ENCODE measurements at regions of chr7 and their contacts with region 1.

Region 1: DNA sequence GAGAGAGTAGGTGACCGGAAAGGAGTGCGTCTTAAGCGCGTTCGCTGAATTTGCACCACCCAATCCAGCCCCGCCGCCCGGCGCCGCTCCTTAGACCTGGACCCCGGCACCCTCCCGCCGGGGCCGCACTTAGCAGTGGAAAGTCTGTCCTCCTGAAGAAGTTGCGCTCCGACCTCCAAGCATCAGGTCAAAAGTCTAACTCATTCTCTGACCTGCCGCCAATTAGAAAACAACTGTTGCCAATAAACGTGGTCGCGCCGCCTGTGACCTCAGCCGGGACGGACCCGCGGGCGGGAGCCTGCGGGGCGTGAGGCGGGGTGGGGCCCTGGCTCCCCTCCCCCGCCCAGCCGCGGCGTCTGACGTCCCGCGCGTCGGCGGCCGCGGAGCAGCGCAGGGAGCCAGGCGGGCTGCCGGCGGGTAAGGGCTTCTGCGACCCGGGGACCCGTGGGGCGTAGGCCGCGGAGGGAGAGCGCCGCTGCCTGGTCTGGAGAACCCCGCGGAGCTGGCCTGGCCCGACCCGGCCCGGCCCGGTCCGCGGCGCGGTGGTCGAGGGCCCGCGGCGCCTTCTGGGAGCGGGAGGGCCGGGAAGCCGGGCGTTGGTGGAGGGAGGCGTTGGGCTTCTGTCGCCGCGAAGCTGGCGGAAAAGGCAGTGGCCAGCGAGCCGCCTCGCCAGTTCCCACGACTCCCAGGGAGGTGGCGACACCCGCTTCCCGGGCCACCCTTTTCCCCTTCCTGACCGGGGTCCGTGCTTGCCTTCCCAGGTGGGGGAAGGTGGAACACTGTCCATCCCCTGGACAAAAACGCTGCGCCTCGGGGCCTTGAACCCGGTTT is at the start of gene BCAP29:
- DNase-seq: peak; percentile 22 to 87 (median 59)
- ATAC-seq: peak; percentile 95
- H3K4me3 ChIP-seq: peak within 1 kb of the TSS; percentile 81 to 91
- H3K4me3 Mint-ChIP-seq: peak within 1 kb of the TSS; percentile 90
- H3K27ac ChIP-seq: peak within 1 kb of the TSS; percentile 67 to 69
- H3K27ac Mint-ChIP-seq: peak within 1 kb of the TSS; percentile 91
- H3K4me1 ChIP-seq: peaks cover 14% of the 10 kb centered on the region
- H3K4me1 Mint-ChIP-seq: peaks cover 25% of the 10 kb centered on the region
- H3K27me3 ChIP-seq: no peaks in the 10 kb centered on the region
- H3K27me3 Mint-ChIP-seq: no peaks in the 10 kb centered on the region
- CTCF ChIP-seq: no peak
- total RNA-seq, gene BCAP29: 7.9 to 9.0 TPM

Region 2: DNA sequence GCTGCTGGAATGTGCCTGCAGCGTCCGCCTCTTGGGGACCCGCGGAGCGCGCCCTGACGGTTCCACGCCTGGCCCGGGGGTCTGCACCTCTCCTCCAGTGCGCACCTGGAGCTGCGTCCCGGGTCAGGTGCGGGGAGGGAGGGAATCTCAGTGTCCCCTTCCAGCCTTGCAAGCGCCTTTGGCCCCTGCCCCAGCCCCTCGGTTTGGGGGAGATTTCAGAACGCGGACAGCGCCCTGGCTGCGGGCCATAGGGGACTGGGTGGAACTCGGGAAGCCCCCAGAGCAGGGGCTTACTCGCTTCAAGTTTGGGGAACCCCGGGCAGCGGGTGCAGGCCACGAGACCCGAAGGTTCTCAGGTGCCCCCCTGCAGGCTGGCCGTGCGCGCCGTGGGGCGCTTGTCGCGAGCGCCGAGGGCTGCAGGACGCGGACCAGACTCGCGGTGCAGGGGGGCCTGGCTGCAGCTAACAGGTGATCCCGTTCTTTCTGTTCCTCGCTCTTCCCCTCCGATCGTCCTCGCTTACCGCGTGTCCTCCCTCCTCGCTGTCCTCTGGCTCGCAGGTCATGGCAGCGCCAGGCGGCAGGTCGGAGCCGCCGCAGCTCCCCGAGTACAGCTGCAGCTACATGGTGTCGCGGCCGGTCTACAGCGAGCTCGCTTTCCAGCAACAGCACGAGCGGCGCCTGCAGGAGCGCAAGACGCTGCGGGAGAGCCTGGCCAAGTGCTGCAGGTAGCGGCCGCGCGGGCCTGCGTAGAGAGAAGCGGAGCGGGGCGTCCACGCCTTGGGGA is 81.2 kb after region 1 on chr7:
- CTCF ChIA-PET with region 1: no interaction called
- POLR2A ChIA-PET with region 1: no interaction called
- intact Hi-C with region 1: loop called in 1 of 2 experiments (anchors 2 kb)
- DNase-seq: peak in 5 of 9 experiments; percentile 20 to 52 (median 35)
- ATAC-seq: peak; percentile 56
- H3K4me3 ChIP-seq: peak overlapping the region; percentile 39 to 48
- H3K4me3 Mint-ChIP-seq: peak overlapping the region; percentile 83
- H3K27ac ChIP-seq: no peak overlapping the region
- H3K27ac Mint-ChIP-seq: no peak overlapping the region
- H3K4me1 ChIP-seq: peaks cover 20% of the 10 kb centered on the region
- H3K4me1 Mint-ChIP-seq: peaks cover 17% of the 10 kb centered on the region
- H3K27me3 ChIP-seq: peaks cover 12 to 23% of the 10 kb centered on the region in 2 experiments
- H3K27me3 Mint-ChIP-seq: peaks cover 39% of the 10 kb centered on the region
- CTCF ChIP-seq: no peak